ENCODE measurements at regions of chr1 and their contacts with region 1.

Region 1: GRCh38 chr1:23577056-23578004 is 18.0 kb upstream of the ID3 start:
- DNase-seq: peak in 1 of 2 experiments; percentile 84
- H3K4me3 ChIP-seq: no peak overlapping the region; the same call in 1 of the 2 replicates
- H3K27ac ChIP-seq: peak overlapping the region; percentile 93
- H3K4me1 ChIP-seq: peaks cover 55% of the 10 kb centered on the region
- H3K27me3 ChIP-seq: no peaks in the 10 kb centered on the region
- CTCF ChIP-seq: no peak

Region 2: DNA sequence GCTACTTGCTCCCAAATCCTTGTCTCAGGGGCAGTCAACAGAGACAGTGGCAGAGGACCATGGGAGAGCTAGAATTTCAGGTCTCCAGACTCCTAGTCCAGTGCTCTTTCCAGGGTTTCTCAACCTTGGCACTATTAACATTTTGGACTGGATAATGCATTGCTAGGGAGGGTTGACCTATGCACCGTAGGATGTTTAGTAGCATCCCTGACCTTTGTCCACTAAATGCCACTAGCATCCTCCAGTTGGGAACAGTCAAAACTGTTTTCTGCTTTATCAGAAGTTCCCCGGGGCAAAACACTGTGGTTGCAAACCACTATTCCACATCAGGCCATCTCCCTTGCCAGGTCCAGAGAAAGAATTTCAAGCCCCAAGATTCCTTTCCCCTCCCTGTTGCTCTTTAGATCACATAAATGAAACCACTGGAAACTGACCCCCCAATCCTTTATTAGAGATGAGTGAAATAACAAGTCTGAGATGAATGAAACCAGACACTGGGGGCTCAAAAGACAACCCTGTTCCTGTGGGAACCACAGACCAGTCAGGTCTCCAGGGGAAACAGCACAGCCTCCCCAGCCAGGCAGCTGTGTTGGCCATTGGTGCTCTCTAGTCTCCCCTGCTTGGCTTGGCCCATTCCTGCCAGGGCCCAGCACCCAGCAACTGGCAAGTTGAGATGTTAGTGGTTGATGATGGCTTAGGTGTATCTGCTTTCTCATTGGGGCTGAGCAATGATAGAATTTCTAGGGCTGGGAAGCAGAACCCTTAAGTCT is 149.0 kb before region 1 on chr1:
- CTCF ChIA-PET with region 1: no interaction called
- POLR2A ChIA-PET with region 1: no interaction called
- intact Hi-C with region 1: no loop called
- DNase-seq: no peak
- H3K4me3 ChIP-seq: no peak overlapping the region
- H3K27ac ChIP-seq: no peak overlapping the region
- H3K4me1 ChIP-seq: no peaks in the 10 kb centered on the region
- H3K27me3 ChIP-seq: no peaks in the 10 kb centered on the region
- CTCF ChIP-seq: no peak

Region 3: GRCh38 chr1:23591460-23592208 is 14.3 kb after region 1 on chr1:
- CTCF ChIA-PET with region 1: interaction called, 3 read pairs
- POLR2A ChIA-PET with region 1: interaction called, 8 read pairs
- intact Hi-C with region 1: loop called (anchors 2 kb)
- DNase-seq: no peak
- H3K4me3 ChIP-seq: no peak overlapping the region
- H3K27ac ChIP-seq: peak overlapping the region; percentile 93; the same call in 1 of the 2 replicates
- H3K4me1 ChIP-seq: peaks cover 39% of the 10 kb centered on the region
- H3K27me3 ChIP-seq: no peaks in the 10 kb centered on the region
- CTCF ChIP-seq: no peak

Region 4: GRCh38 chr1:24175033-24175755 is 597.9 kb after region 1 on chr1:
- CTCF ChIA-PET with region 1: no interaction called
- POLR2A ChIA-PET with region 1: no interaction called
- intact Hi-C with region 1: no loop called
- DNase-seq: peak in 1 of 2 experiments; percentile 43
- H3K4me3 ChIP-seq: no peak overlapping the region
- H3K27ac ChIP-seq: 0 out of 2 replicates have a peak overlapping the region, but pooled peaks have one; percentile 34
- H3K4me1 ChIP-seq: peaks cover 11% of the 10 kb centered on the region; the same call in 1 of the 2 replicates
- H3K27me3 ChIP-seq: no peaks in the 10 kb centered on the region
- CTCF ChIP-seq: no peak